ENCODE measurements at regions of chr20 and their contacts with region 1.

Region 1: DNA sequence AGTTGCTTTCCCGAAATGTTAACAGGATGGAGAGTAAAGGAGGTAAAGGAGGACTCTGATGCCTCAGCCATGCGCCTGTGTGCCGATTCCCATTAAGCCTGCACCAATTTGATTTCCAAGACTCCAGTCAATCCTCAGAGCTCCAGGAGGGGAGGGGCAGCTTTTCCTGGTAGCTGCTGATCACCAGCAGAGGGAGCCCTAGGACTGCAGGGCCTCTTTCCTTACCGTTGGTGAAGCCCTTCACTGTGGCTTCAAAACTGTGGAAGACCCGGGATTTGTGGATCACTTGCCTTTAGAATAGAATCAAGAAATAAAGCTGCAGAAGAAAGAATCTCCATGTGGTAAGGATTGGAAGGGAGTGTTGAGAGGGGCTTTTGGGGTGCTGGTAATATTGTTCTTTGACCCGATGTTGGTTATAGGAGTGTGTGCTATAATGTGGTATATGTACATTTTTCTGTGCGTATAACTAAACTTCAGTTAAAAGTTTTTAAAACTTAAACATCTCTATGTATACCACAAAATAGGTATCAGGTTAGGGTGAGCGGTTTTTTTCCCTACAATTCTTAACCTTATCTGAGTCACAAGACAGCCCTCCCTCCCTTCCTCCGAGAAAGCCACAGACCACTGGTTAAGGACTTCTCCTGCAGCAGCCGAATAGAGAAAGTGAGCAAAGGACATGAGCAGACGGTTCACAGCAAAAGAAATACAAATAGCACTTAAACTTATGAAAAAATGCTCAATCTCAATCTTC is 6.9 kb upstream of the OSER1 start:
- DNase-seq: peak; percentile 52 to 69
- ATAC-seq: peak; percentile 66 to 84 (median 78)
- H3K4me3 ChIP-seq: peak overlapping the region in 8 of 10 donors; percentile 2 to 43 (median 27)
- H3K27ac ChIP-seq: peak overlapping the region in 8 of 10 donors; percentile 1 to 72 (median 48)
- H3K4me1 ChIP-seq: peaks cover 0 to 35% (median 18%) of the 10 kb centered on the region in 9 donors
- H3K27me3 ChIP-seq: no peaks in the 10 kb centered on the region
- CTCF ChIP-seq: peak; percentile 63 to 95 (median 84)

Region 2: GRCh38 chr20:44129911-44130718 is 87.4 kb before region 1 on chr20:
- intact Hi-C with region 1: no loop called
- DNase-seq: no peak
- ATAC-seq: peak in 4 of 8 donors; percentile 25 to 39 (median 30)
- H3K4me3 ChIP-seq: no peak overlapping the region
- H3K27ac ChIP-seq: peak overlapping the region in 3 of 10 donors; percentile 13 to 28 (median 25)
- H3K4me1 ChIP-seq: peaks cover 0 to 30% (median 9%) of the 10 kb centered on the region in 9 donors
- H3K27me3 ChIP-seq: no peaks in the 10 kb centered on the region
- CTCF ChIP-seq: no peak

Region 3: GRCh38 chr20:44253528-44253927 is 36.0 kb after region 1 on chr20:
- intact Hi-C with region 1: no loop called
- DNase-seq: no peak
- ATAC-seq: no peak
- H3K4me3 ChIP-seq: no peak overlapping the region
- H3K27ac ChIP-seq: no peak overlapping the region
- H3K4me1 ChIP-seq: no peaks in the 10 kb centered on the region
- H3K27me3 ChIP-seq: peaks cover 0 to 3% (median 0%) of the 10 kb centered on the region in 7 donors
- CTCF ChIP-seq: no peak

Region 4: GRCh38 chr20:44388466-44389023 is 171.0 kb after region 1 on chr20:
- intact Hi-C with region 1: loop called (anchors 1 to 10 kb)
- DNase-seq: peak; percentile 33 to 68
- ATAC-seq: peak in 7 of 8 donors; percentile 50 to 80 (median 70)
- H3K4me3 ChIP-seq: no peak overlapping the region
- H3K27ac ChIP-seq: no peak overlapping the region
- H3K4me1 ChIP-seq: peaks cover 0 to 6% (median 0%) of the 10 kb centered on the region in 9 donors
- H3K27me3 ChIP-seq: peaks cover 0 to 27% (median 18%) of the 10 kb centered on the region in 7 donors
- CTCF ChIP-seq: peak; percentile 35 to 80 (median 64)

Region 5: GRCh38 chr20:44460795-44461141 is 243.3 kb after region 1 on chr20:
- intact Hi-C with region 1: loop called in 9 of 10 experiments (anchors 2 to 10 kb)
- DNase-seq: no peak
- ATAC-seq: peak in 1 of 8 donors; percentile 42
- H3K4me3 ChIP-seq: no peak overlapping the region
- H3K27ac ChIP-seq: no peak overlapping the region
- H3K4me1 ChIP-seq: no peaks in the 10 kb centered on the region
- H3K27me3 ChIP-seq: no peaks in the 10 kb centered on the region
- CTCF ChIP-seq: peak in 8 of 9 donors; percentile 7 to 60 (median 42)

Region 6: DNA sequence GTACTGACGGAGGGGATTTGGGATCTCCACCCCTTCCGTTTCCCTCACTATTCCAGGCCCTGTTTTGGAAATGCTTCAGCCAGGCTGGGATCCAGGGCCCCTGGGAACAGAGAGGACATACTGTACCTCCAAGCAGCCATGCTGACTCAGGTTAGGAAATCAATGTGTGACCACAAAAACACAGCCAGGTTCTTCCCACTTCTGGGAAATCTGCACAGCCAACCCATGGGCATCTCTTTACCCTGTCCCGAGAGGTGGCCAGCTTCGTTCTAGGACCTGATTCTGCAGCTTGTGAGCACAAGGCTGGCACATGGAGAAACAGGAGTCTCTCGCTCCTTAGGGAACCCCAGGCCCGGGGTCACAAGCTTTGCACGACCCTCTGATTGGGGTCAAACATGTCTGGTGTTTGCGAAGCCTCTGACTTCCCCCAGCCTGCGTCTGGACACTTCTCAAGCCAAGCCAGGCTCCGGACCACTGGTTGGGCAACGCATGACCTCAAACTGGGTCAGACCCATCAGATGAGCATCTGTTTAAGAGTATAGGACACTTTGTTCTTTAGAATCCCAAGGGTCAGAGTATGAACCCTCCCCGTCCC is 249.9 kb after region 1 on chr20:
- intact Hi-C with region 1: loop called in 9 of 10 experiments (anchors 5 to 10 kb)
- DNase-seq: peak in 1 of 2 donors; percentile 46
- ATAC-seq: peak in 5 of 8 donors; percentile 23 to 88 (median 71)
- H3K4me3 ChIP-seq: no peak overlapping the region
- H3K27ac ChIP-seq: no peak overlapping the region
- H3K4me1 ChIP-seq: peaks cover 0 to 7% (median 0%) of the 10 kb centered on the region in 9 donors
- H3K27me3 ChIP-seq: no peaks in the 10 kb centered on the region
- CTCF ChIP-seq: no peak

Region 7: DNA sequence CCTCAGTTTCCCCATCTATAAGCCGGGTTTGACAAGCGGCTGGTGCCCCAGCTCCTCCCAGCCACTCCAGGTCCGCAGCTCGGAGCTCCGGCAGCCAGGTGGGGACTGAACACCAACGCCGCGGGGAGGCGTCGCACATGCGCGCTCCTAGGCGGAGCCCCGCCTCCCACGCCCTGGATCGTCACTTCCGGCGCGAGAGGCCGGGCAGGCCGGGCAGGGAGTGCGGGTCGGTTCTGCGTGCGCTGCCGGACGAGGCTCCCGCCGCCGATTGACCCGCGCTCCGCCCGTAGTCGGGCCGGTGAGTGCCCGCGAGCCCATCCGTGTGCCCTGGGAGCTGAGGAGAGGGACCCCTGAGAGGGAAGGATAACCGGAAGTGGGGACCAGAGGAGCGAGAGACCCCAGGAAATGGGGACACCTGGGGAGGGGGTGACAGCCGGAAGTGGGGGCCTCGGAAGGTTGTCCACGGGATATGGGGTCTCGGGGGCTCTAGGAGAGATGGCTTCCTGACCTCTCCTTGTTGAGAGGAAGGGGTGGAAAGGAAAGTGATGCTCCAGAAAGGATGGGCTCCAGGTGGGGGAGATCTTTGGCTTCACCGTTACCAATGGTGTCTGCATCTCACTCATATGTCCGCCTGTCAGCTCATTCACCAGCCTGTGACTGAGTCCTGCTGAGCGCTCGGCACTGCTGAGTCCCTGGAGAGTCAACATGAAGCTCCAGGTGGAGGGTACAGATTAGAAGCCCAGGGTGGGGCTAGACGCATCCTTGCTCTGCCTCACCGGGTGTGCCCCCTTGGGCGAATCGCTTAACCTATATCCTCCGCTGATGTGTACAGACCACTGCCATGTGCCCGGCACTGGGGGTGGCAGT is 258.4 kb after region 1 on chr20 and contains the start of gene TTPAL:
- intact Hi-C with region 1: loop called in 2 of 10 experiments (anchors 5 to 10 kb)
- DNase-seq: peak; percentile 85 to 89
- ATAC-seq: peak; percentile 97 to 99 (median 98)
- H3K4me3 ChIP-seq: peak within 1 kb of the TSS; percentile 43 to 82 (median 70)
- H3K27ac ChIP-seq: peak within 1 kb of the TSS; percentile 75 to 97 (median 89)
- H3K4me1 ChIP-seq: peaks cover 3 to 21% (median 12%) of the 10 kb centered on the region in 9 donors
- H3K27me3 ChIP-seq: no peaks in the 10 kb centered on the region
- CTCF ChIP-seq: peak in 7 of 9 donors; percentile 28 to 68 (median 42)
- total RNA-seq, gene TTPAL: 2.6 to 7.3 (median 4.7) TPM

Measured in heart right ventricle (tissue), 16 donors.